ENCODE measurements at regions of chr11 and their contacts with region 1.

Region 1: DNA sequence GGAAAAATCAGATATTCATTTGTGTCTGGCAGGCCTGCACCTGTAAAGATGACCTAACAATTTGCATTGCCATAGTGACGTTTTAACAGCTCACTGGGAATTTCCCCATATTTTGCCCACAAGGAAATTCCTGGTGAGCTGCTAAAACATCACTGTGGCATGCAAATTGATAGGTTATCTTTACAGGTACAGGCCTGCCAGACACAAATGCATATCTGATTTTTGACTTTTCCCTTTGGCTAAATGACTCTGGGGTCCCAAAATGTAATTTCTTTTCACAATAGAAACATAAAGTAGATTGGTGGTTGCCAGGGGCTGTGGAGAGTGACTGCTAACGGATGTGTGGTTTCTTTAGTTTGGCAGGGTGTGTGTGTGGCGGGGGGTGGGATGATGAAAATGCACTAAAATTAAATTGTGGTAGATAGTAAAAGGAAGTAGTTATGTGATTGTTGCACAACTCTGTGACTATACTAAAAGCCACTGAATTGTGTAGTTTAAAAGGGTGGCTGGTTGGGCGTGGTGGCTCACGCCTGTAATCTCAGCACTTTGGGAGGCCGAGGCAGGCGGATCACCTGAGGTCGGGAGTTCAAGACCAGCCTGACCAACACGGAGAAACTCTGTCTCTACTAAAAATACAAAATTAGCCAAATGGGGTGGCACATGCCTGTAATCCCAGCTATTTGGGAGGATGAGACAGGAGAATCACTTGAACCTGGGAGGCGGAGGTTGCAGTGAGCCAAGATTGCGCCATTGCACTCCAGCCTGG is 18.5 kb upstream of the FEZ1 start:
- DNase-seq: peak; percentile 27
- ATAC-seq: peak; percentile 80
- H3K4me3 Mint-ChIP-seq: peak overlapping the region; percentile 21
- H3K27ac Mint-ChIP-seq: peak overlapping the region; percentile 92
- H3K4me1 Mint-ChIP-seq: peaks cover 45% of the 10 kb centered on the region
- H3K27me3 Mint-ChIP-seq: no peaks in the 10 kb centered on the region
- CTCF ChIP-seq: no peak

Region 2: DNA sequence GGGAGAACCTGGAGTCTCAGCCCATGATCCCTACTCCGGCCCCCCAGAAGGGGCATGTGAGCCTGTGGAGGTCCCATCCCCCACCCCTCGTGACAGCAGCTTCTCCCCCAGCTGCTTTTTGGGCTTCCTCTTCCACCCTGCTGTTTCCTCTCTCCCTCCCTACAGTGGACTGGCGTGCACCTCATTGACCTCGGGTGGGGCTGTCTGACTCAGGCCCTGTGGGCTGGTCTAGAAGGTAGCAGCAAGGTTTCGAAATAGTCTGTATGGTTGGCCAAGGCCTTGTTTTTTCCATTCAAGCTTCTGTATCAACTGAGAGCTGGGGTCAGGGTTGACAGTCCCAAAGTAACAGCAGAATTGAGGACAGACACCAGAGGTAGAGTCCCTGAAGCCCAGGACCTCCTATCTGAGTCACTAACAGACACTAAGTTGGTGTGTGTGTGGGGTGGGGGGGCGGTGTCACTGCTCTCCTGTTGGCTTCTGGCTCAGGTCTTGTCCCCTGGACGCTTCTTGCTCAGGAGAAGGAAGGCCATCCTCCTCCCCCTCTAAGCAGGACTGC is 443.7 kb before region 1 on chr11:
- CTCF ChIA-PET with region 1: no interaction called
- POLR2A ChIA-PET with region 1: interaction called, 4 read pairs
- intact Hi-C with region 1: loop called (anchors 1 kb)
- DNase-seq: no peak
- ATAC-seq: peak; percentile 69
- H3K4me3 Mint-ChIP-seq: peak overlapping the region; percentile 40
- H3K27ac Mint-ChIP-seq: peak overlapping the region; percentile 82
- H3K4me1 Mint-ChIP-seq: peaks cover 71% of the 10 kb centered on the region
- H3K27me3 Mint-ChIP-seq: peaks cover 2% of the 10 kb centered on the region
- CTCF ChIP-seq: no peak

Region 3: DNA sequence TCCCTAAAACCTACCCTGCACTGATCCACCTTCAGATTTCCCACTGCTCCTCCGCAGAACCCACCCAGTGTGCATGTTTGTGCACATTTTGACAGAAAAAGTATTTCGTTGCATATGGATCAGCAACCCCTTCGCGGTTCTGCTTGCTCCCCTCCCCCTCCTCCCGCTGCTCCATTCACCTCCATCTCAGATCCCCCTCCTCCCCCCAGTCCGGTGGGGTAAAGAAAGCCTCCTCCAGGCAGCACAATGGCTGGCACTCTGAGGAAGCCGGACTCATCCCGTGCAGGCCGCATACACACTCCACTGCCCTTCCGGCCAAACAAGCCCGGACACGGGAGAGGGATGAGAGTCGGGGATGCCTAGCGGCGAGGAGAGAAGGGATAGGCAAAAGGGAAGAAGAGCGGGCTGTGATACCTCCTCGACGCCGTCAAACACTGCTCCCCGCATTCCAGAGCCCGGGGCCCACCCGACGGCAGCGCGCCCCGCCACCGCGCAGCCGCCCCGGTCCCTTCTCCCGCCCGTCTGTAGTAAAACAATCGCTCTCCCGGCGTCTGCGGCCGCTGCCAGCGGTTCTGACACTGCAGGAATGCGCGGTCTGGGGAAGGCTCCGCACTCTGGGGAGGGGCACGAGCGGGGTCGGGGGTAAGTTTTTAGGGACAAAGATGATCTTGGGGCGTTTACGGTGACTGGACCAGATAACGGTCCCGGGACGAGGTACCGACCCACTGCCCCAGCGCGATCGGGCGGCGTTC is 19.4 kb before region 1 on chr11:
- CTCF ChIA-PET with region 1: no interaction called
- POLR2A ChIA-PET with region 1: interaction called, 17 read pairs
- intact Hi-C with region 1: loop called (anchors 1 kb)
- DNase-seq: peak; percentile 35
- ATAC-seq: peak; percentile 40
- H3K4me3 Mint-ChIP-seq: peak overlapping the region; percentile 85
- H3K27ac Mint-ChIP-seq: peak overlapping the region; percentile 50
- H3K4me1 Mint-ChIP-seq: peaks cover 24% of the 10 kb centered on the region
- H3K27me3 Mint-ChIP-seq: peaks cover 38% of the 10 kb centered on the region
- CTCF ChIP-seq: no peak

Region 4: DNA sequence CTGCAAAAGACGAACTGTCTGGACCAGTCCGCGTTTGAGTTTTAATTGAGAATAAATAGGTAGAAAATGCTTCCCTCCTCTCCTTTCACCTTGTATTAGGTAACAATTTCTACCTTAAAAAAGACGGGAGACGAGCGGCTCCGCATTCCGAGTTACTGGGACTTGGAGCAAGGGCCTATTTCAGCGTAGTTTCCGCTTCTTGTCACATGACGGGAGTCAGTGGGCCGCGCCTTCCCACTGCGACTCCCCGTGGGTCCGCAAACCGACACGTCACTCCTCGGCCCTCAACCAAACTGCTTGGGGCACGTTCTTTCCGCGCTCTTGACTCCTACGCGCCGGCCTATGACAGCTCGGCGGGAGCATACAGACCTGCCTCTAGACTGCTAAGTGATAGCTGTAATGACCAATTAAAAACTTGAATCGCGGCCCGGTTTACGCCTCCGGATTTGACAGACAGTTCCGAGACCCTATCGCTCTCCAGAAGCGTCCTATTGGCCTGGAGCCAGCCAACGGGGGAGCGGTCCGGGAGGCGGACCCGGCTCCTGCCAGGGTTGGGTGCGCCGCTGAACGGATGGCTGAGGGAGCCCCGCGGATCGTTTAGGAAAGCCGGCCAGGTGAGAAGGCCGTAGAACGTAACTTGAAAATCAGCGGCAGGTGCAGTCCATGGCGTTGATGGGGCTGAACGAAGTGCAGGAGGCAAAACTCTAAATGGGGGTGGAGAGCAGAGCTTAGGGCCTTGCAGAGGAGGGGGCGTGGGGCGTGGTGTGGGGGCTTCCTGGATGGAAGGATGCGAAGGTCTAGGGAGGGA is 78.0 kb after region 1 on chr11 and contains the start of gene STT3A:
- CTCF ChIA-PET with region 1: no interaction called
- POLR2A ChIA-PET with region 1: interaction called, 38 read pairs
- intact Hi-C with region 1: loop called (anchors 1 kb)
- DNase-seq: peak; percentile 90
- ATAC-seq: peak; percentile 92
- H3K4me3 Mint-ChIP-seq: peak within 1 kb of the TSS; percentile 95
- H3K27ac Mint-ChIP-seq: peak within 1 kb of the TSS; percentile 99
- H3K4me1 Mint-ChIP-seq: peaks cover 58% of the 10 kb centered on the region
- H3K27me3 Mint-ChIP-seq: no peaks in the 10 kb centered on the region
- CTCF ChIP-seq: no peak
- total RNA-seq, gene STT3A: 79.4 and 86.5 TPM in 2 replicates

Region 5: GRCh38 chr11:126303623-126304456 is 789.3 kb after region 1 on chr11 and contains the start of gene DCPS:
- CTCF ChIA-PET with region 1: no interaction called
- POLR2A ChIA-PET with region 1: no interaction called
- intact Hi-C with region 1: loop called (anchors 10 kb)
- DNase-seq: peak; percentile 92
- ATAC-seq: peak; percentile 98
- H3K4me3 Mint-ChIP-seq: peak within 1 kb of the TSS; percentile 93
- H3K27ac Mint-ChIP-seq: peak within 1 kb of the TSS; percentile 92
- H3K4me1 Mint-ChIP-seq: peaks cover 38% of the 10 kb centered on the region
- H3K27me3 Mint-ChIP-seq: no peaks in the 10 kb centered on the region
- CTCF ChIP-seq: no peak
- total RNA-seq, gene DCPS: 37.6 and 39.6 TPM in 2 replicates